H1 (cell line): ENCODE measurements at regions of chr4 and their contacts with region 1.

Region 1: GRCh38 chr4:48033825-48034413 is 17.3 kb downstream of the NIPAL1 start:
- DNase-seq: peak in 1 of 2 experiments; percentile 63
- H3K4me3 ChIP-seq: no peak overlapping the region
- H3K27ac ChIP-seq: no peak overlapping the region
- H3K4me1 ChIP-seq: peaks cover 0 to 11% (median 0%) of the 10 kb centered on the region in 4 experiments; a peak in 4 of 7 replicates
- H3K27me3 ChIP-seq: no peaks in the 10 kb centered on the region
- CTCF ChIP-seq: peak in 2 of 3 experiments; percentile 51 to 75; a peak in 2 of 4 replicates
- EP300 ChIP-seq: no peak
- POLR2A ChIP-seq: no peak
- RAD21 ChIP-seq: peak; percentile 44 to 58

Region 2: GRCh38 chr4:48017104-48017571 is 16.8 kb before region 1 on chr4:
- CTCF ChIA-PET with region 1: interaction called, 45 read pairs
- POLR2A ChIA-PET with region 1: interaction called, 6 read pairs
- DNase-seq: peak in 1 of 2 experiments; percentile 72
- H3K4me3 ChIP-seq: peak overlapping the region; percentile 46 to 93 (median 84)
- H3K27ac ChIP-seq: no peak overlapping the region
- H3K4me1 ChIP-seq: peaks cover 0 to 2% (median 0%) of the 10 kb centered on the region in 4 experiments; a peak in 1 of 7 replicates
- H3K27me3 ChIP-seq: peaks cover 0 to 14% (median 6%) of the 10 kb centered on the region in 4 experiments; a peak in 5 of 7 replicates
- CTCF ChIP-seq: no peak
- EP300 ChIP-seq: no peak
- POLR2A ChIP-seq: no peak
- RAD21 ChIP-seq: no peak

Region 3: DNA sequence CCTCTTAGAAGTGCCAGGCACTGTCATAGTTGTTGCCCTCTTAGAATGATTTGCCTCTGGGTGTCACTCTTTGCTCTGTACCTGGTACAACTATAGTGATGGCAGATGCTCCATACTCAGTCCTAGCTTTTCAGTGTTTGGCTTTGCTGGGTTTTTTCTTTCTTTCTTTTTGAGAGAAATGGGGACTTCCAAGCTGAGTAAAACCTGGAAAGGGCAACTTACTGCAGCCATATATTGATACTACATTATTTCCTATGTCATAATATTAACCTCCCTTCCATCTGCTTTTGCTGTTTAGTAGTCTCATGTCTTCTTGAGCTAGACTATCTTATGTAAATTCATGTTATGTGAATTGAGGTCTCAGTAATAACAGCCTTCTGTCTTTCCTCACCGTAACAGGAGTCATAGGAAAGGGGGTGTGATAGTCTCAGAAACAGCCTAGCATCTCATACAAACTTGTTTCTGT is 31.7 kb after region 1 on chr4:
- CTCF ChIA-PET with region 1: interaction called, 15 read pairs
- POLR2A ChIA-PET with region 1: no interaction called
- DNase-seq: no peak
- H3K4me3 ChIP-seq: no peak overlapping the region
- H3K27ac ChIP-seq: no peak overlapping the region
- H3K4me1 ChIP-seq: no peaks in the 10 kb centered on the region
- H3K27me3 ChIP-seq: no peaks in the 10 kb centered on the region
- CTCF ChIP-seq: no peak
- EP300 ChIP-seq: no peak
- POLR2A ChIP-seq: no peak
- RAD21 ChIP-seq: no peak

Region 4: DNA sequence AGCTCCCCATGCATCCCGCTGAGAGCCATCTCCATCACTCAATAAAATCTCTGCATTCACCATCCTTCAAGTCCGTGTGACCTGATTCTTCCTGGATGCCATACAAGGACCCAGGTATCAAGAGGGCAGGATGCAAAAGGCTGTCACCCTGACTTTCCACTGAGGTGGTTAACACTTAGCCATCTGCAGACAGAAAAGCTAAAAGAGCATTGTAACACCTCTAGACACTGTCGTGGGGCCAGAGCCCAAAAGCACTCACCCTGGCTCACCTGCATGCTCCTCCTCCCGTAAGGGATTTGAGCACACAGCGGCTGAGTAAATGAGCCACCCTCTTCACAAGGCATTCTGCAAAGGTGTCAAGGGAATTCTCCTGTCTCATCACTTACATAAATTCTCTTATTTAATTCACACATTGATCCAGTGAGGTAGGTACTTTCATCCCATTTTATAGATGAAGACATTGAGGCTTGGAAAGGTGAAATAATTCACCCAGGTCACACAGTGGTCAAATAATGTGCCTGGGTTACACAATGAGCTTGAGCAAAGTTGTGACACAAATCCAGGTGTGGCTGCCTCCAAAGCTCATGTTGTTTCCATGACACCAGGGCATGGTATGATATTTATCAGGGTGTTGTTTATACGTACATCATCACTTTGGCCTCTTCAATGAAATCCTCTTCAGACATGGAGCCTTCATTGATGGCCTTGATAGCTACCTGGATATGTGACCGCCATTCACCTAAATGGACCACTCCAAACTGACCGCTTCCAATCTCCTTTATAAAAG is 52.1 kb after region 1 on chr4:
- CTCF ChIA-PET with region 1: interaction called, 56 read pairs
- POLR2A ChIA-PET with region 1: no interaction called
- DNase-seq: no peak
- H3K4me3 ChIP-seq: no peak overlapping the region
- H3K27ac ChIP-seq: no peak overlapping the region
- H3K4me1 ChIP-seq: no peaks in the 10 kb centered on the region
- H3K27me3 ChIP-seq: no peaks in the 10 kb centered on the region
- CTCF ChIP-seq: no peak
- EP300 ChIP-seq: no peak
- POLR2A ChIP-seq: no peak
- RAD21 ChIP-seq: no peak